Natural killer cell (primary cell): ENCODE measurements at regions of chr16 and their contacts with region 1.

Region 1: GRCh38 chr16:89409161-89409711 is 81.1 kb downstream of the ANKRD11 start:
- DNase-seq: peak; percentile 63 to 89
- ATAC-seq: peak; percentile 72 to 82 (median 81)
- H3K4me3 ChIP-seq: no peak overlapping the region
- H3K4me3 Mint-ChIP-seq: peak overlapping the region; percentile 75
- H3K27ac ChIP-seq: peak overlapping the region; percentile 81
- H3K27ac Mint-ChIP-seq: peak overlapping the region; percentile 73 to 82
- H3K4me1 ChIP-seq: peaks cover 94% of the 10 kb centered on the region
- H3K4me1 Mint-ChIP-seq: peaks cover 80 to 85% of the 10 kb centered on the region in 2 donors
- H3K27me3 ChIP-seq: no peaks in the 10 kb centered on the region
- H3K27me3 Mint-ChIP-seq: no peaks in the 10 kb centered on the region
- CTCF ChIP-seq: no peak

Region 2: DNA sequence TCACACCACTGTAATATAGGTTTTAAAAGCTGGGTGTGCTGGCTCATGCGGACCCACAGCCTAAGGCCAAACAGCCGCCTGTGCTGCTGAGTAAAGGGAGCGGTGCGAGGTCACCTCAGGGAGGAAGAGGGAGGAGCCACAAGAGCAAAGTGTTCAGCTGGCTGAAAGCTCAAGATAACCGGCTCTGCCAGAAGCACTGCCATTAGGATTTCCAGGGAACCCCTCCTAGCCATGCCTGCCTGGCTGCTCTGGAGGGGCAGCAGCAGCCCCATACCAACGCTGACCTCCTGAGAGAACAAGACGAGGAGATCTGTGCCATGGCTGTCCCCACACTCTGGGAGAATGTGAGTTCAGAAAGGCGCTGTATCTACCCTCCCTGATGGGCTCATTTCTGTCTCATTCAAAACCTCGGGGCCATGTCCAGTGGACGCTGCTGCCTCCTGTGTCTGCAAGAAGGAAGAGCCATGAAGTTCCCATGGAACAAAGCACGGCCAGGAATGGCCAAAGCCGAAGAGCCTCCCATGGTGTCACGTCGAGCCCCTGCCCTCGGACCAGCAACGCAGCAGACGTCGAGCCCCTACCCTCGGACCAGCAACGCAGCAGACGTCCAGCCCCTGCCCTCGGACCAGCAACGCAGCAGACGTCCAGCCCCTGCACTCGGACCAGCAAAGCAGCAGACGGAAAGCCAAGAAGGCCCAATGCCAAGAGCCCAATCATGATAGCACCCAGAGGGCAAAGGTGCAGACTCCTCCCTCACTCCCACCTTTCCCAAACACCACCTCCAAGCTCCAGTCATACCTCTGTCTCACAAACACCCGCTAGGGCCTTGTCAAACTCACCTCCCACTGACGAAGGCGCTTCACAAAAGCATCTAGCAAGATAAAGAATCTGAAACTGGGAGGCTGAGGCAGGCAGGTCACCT is 25.9 kb before region 1 on chr16:
- intact Hi-C with region 1: loop called (anchors 2 kb)
- DNase-seq: peak; percentile 28 to 44
- ATAC-seq: peak; percentile 79 to 87 (median 83)
- H3K4me3 ChIP-seq: no peak overlapping the region
- H3K4me3 Mint-ChIP-seq: peak overlapping the region; percentile 61
- H3K27ac ChIP-seq: no peak overlapping the region
- H3K27ac Mint-ChIP-seq: peak overlapping the region; percentile 43 to 78
- H3K4me1 ChIP-seq: peaks cover 76% of the 10 kb centered on the region
- H3K4me1 Mint-ChIP-seq: peaks cover 75 to 83% of the 10 kb centered on the region in 2 donors
- H3K27me3 ChIP-seq: no peaks in the 10 kb centered on the region
- H3K27me3 Mint-ChIP-seq: no peaks in the 10 kb centered on the region
- CTCF ChIP-seq: no peak

Region 3: GRCh38 chr16:89422905-89423630 is 13.8 kb after region 1 on chr16:
- intact Hi-C with region 1: loop called (anchors 2 kb)
- DNase-seq: peak; percentile 69 to 75
- ATAC-seq: peak; percentile 86 to 95 (median 91)
- H3K4me3 ChIP-seq: no peak overlapping the region
- H3K4me3 Mint-ChIP-seq: peak overlapping the region; percentile 70
- H3K27ac ChIP-seq: peak overlapping the region; percentile 22
- H3K27ac Mint-ChIP-seq: peak overlapping the region; percentile 76 to 86
- H3K4me1 ChIP-seq: peaks cover 81% of the 10 kb centered on the region
- H3K4me1 Mint-ChIP-seq: peaks cover 74 to 84% of the 10 kb centered on the region in 2 donors
- H3K27me3 ChIP-seq: no peaks in the 10 kb centered on the region
- H3K27me3 Mint-ChIP-seq: no peaks in the 10 kb centered on the region
- CTCF ChIP-seq: no peak

Region 4: DNA sequence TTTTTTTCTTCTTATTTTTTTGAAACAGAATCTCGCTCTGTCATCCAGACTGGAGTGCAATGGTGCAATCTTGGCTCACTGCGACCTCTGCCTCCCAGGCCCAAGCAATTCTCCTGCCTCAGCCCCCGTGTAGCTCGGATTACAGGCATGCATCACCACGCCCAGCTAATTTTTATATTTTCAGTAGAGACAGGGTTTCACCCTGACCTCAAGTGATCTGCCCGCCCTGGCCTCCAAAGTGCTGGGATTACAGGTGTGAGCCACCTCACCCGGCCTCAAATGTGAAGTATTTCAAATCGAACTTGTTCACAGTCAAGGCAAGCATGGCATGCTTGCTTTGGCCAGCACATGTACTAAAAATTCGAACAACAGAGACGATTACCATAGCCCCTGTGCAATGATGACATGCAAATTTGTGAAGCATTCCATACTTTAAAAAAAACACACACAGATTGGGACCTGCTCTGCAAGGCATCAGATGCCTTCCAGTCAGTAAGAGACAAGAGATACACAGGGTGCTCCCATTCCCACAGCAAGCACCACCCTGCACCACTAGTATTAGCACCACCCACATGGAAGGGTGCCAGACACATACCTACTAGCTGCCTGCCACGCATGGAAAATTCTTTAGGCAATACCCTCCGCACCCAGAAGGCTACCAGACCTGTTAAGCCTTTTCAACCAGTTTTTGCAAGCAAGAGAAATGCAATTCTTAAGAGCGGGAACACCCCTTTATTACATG is 33.9 kb after region 1 on chr16:
- intact Hi-C with region 1: loop called (anchors 5 kb)
- DNase-seq: peak in 1 of 2 donors; percentile 42
- ATAC-seq: no peak
- H3K4me3 ChIP-seq: no peak overlapping the region
- H3K4me3 Mint-ChIP-seq: peak overlapping the region; percentile 42
- H3K27ac ChIP-seq: no peak overlapping the region
- H3K27ac Mint-ChIP-seq: peak overlapping the region; percentile 47 to 60
- H3K4me1 ChIP-seq: peaks cover 84% of the 10 kb centered on the region
- H3K4me1 Mint-ChIP-seq: peaks cover 83 to 88% of the 10 kb centered on the region in 2 donors
- H3K27me3 ChIP-seq: no peaks in the 10 kb centered on the region
- H3K27me3 Mint-ChIP-seq: no peaks in the 10 kb centered on the region
- CTCF ChIP-seq: no peak

Region 5: GRCh38 chr16:89473791-89474414 is 64.7 kb after region 1 on chr16:
- intact Hi-C with region 1: no loop called
- DNase-seq: no peak
- ATAC-seq: peak; percentile 23 to 58 (median 35)
- H3K4me3 ChIP-seq: no peak overlapping the region
- H3K4me3 Mint-ChIP-seq: peak overlapping the region; percentile 75
- H3K27ac ChIP-seq: no peak overlapping the region
- H3K27ac Mint-ChIP-seq: peak overlapping the region; percentile 79
- H3K4me1 ChIP-seq: peaks cover 79% of the 10 kb centered on the region
- H3K4me1 Mint-ChIP-seq: peaks cover 73 to 89% of the 10 kb centered on the region in 2 donors
- H3K27me3 ChIP-seq: no peaks in the 10 kb centered on the region
- H3K27me3 Mint-ChIP-seq: no peaks in the 10 kb centered on the region
- CTCF ChIP-seq: no peak